Activated B cell treated with CpG ODN at 0.5 μM for 24 hours (primary cell): ENCODE measurements at regions of chr17 and their contacts with region 1.

Region 1: DNA sequence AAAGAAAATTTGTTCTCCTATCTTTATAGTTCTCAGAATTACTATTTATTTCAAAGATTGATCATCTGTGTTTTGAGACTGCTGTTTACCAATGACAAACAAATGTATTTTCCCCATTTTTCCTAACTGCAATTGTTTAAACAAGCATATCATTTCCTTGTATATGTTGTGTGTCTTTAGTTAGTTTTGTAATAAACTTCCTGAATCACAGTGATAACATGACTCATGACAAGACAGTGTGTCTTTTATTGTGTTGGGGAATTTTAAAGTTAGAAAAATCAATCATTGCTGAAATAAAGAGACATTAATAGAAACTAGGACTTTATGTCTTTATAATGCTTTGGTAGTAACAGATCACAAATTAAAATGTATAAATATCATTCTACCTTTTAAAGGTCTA is 348.5 kb downstream of the KCNJ2 start:
- DNase-seq: no peak
- ATAC-seq: no peak
- H3K4me3 Mint-ChIP-seq: no peak overlapping the region
- H3K27ac Mint-ChIP-seq: no peak overlapping the region
- H3K4me1 Mint-ChIP-seq: no peaks in the 10 kb centered on the region
- H3K27me3 Mint-ChIP-seq: no peaks in the 10 kb centered on the region
- CTCF ChIP-seq: no peak

Region 2: GRCh38 chr17:70493277-70493874 is 24.4 kb before region 1 on chr17:
- CTCF ChIA-PET with region 1: no interaction called
- POLR2A ChIA-PET with region 1: no interaction called
- intact Hi-C with region 1: no loop called
- DNase-seq: no peak
- ATAC-seq: no peak
- H3K4me3 Mint-ChIP-seq: no peak overlapping the region
- H3K27ac Mint-ChIP-seq: no peak overlapping the region
- H3K4me1 Mint-ChIP-seq: no peaks in the 10 kb centered on the region
- H3K27me3 Mint-ChIP-seq: no peaks in the 10 kb centered on the region
- CTCF ChIP-seq: no peak

Region 3: DNA sequence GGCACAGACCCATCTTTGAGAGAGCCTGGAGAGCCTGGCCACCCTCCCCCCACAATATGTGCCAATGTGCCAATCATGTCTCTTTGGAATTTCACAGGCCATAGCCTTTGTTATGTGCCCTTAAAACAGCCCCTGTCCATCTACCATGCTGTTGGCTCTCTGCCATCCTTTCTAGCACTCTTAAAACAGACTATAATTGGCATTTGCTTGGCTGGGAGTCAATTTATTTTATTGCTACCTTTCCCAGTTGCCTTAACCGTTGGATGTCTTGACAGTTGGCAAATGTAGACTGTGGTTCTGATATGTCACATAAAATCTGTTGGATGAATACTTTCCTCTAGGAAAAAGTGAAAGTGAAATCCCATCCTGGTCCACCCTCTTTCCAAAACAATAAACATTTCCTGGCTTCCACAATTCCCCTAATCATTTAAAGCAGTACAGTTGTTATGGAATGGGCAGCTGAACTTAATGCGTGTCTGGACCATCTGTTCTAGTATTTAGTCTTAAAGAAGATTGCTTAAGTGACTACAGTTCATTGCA is 45.5 kb after region 1 on chr17:
- CTCF ChIA-PET with region 1: no interaction called
- POLR2A ChIA-PET with region 1: no interaction called
- intact Hi-C with region 1: loop called (anchors 10 kb)
- DNase-seq: no peak
- ATAC-seq: no peak
- H3K4me3 Mint-ChIP-seq: no peak overlapping the region
- H3K27ac Mint-ChIP-seq: no peak overlapping the region
- H3K4me1 Mint-ChIP-seq: no peaks in the 10 kb centered on the region
- H3K27me3 Mint-ChIP-seq: no peaks in the 10 kb centered on the region
- CTCF ChIP-seq: no peak